ENCODE measurements at regions of chr2 and their contacts with region 1.

Region 1: GRCh38 chr2:25851740-25852503 is 26.4 kb downstream of the ASXL2 start:
- DNase-seq: peak; percentile 51 to 83 (median 62)
- ATAC-seq: peak; percentile 92
- H3K4me3 ChIP-seq: peak overlapping the region; percentile 21; the same call in 1 of the 2 replicates
- H3K27ac ChIP-seq: peak overlapping the region; percentile 98
- H3K4me1 ChIP-seq: peaks cover 17 to 22% of the 10 kb centered on the region in 2 experiments
- H3K27me3 ChIP-seq: no peaks in the 10 kb centered on the region
- CTCF ChIP-seq: peak; percentile 53 to 81 (median 65); a peak in 5 of 6 replicates
- EP300 ChIP-seq: peak; percentile 67; the same call in 1 of the 2 replicates
- POLR2A ChIP-seq: peak; percentile 71
- RAD21 ChIP-seq: peak; percentile 85 to 89

Region 2: DNA sequence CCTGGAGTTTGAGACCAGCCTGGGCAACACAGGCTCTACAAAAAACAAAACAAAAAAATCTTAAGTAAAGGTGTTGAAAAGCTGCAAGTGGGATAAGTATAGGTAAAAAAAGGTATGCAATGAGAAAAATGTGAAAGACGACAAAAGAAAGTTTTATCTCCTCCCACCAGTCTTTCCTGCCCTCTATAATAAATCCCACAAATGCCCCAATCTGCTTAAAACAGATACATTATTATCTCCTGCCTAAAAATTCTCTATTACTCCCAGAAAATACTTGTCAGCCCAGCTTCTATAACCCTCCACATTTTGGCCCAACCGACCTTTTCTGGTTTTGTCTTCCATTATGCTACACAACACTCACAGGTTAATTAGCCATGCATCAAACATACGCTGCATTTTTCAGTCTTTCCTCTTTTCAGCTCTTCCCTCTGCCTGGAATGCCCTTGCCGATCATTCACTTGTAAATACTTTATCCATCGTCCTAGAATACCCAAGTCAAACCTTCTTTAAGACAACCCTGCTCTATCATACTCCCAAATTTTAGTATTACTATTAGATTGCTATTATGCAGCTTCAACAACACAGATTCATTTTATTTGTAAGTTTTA is 15.6 kb after region 1 on chr2:
- CTCF ChIA-PET with region 1: no interaction called
- POLR2A ChIA-PET with region 1: interaction called, 10 read pairs
- in situ Hi-C with region 1: no loop called
- intact Hi-C with region 1: no loop called
- DNase-seq: no peak
- ATAC-seq: no peak; the same call in 2 of the 3 replicates
- H3K4me3 ChIP-seq: no peak overlapping the region
- H3K27ac ChIP-seq: no peak overlapping the region
- H3K4me1 ChIP-seq: peaks cover 0 to 3% of the 10 kb centered on the region in 2 experiments; a peak in 1 of 5 replicates
- H3K27me3 ChIP-seq: no peaks in the 10 kb centered on the region
- CTCF ChIP-seq: no peak
- EP300 ChIP-seq: no peak
- POLR2A ChIP-seq: no peak
- RAD21 ChIP-seq: no peak

Region 3: DNA sequence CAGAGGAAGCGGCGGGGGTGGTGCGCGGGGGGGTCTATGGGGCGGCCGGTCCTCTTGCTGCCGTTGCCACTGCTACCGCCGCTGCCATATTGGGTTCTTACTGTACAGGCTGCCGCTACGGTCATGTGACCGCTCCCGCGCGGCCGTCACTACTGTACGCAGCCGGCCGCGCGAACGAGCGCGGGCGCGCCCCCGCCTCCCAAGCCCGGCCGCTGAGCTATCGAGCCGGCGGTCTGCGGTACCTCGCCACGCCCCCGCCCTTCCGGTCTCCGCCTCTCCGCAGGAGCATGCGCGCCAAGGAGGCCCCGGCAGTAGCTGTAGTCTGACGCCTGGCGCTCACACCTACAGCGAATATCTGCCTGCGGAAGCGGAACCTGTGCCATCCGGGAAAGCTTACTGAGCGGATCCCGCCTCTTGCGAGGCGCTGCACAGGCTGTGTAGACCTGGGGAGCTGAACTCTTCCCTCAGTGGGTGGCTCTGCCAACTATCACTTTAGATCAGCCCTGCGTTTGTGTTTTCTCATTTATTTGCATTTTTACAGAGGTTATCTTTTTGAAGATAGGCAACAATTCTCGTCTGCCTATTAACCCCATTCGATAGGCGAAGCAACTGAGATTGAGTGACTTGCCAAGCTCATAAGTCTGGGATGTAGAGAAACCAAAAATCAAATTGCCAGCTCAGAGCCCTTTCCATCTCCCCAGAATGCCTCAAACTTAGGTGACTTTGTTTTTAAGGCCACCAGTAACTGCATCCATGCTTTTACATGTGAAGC is 26.6 kb after region 1 on chr2 and contains the start of gene ASXL2:
- CTCF ChIA-PET with region 1: no interaction called
- POLR2A ChIA-PET with region 1: interaction called, 11 read pairs
- in situ Hi-C with region 1: no loop called
- intact Hi-C with region 1: no loop called
- DNase-seq: peak; percentile 93 to 98 (median 95)
- ATAC-seq: peak; percentile 91
- H3K4me3 ChIP-seq: peak within 1 kb of the TSS; percentile 92
- H3K27ac ChIP-seq: peak within 1 kb of the TSS; percentile 91
- H3K4me1 ChIP-seq: peaks cover 5 to 9% of the 10 kb centered on the region in 2 experiments
- H3K27me3 ChIP-seq: no peaks in the 10 kb centered on the region
- CTCF ChIP-seq: peak in 1 of 3 experiments; percentile 20; a peak in 1 of 6 replicates
- EP300 ChIP-seq: peak; percentile 18; the same call in 1 of the 2 replicates
- POLR2A ChIP-seq: peak; percentile 79
- RAD21 ChIP-seq: no peak
- polyA plus RNA-seq, gene ASXL2: 2.2 to 2.5 TPM

Region 4: DNA sequence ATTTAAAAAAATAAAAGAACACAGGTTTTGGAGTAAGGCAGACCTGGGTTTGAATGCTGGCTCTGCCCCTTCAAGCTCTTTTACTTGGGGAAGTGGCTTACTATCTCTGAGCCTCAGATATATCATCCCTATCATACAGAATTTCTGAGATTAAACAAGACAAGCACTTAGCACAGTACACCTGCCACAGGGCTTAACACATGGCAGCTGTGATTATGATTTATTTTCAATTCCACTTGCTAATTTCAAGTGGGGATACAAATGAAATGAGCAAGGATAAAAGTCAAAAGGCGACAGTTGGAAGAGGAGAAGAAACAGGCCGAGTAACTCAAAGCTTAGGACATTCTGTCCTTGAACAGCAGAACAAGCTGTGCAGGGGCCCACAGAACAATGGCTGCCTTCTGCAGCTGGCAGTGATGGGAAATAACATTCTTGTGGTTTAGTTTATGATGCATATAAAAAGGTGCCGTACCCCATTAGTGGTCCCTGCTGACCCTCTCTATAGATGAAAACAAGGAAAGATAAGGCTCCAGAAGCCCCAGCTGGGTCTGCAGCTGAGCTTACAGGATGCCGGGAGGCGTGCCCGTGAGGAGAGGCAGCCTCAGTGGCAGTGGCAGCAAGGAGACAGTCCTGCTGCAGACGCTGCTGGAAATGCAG is 85.1 kb after region 1 on chr2:
- CTCF ChIA-PET with region 1: no interaction called
- POLR2A ChIA-PET with region 1: no interaction called
- in situ Hi-C with region 1: no loop called
- intact Hi-C with region 1: no loop called
- DNase-seq: no peak
- ATAC-seq: no peak
- H3K4me3 ChIP-seq: no peak overlapping the region
- H3K27ac ChIP-seq: no peak overlapping the region
- H3K4me1 ChIP-seq: no peaks in the 10 kb centered on the region
- H3K27me3 ChIP-seq: no peaks in the 10 kb centered on the region
- CTCF ChIP-seq: no peak
- EP300 ChIP-seq: no peak
- POLR2A ChIP-seq: no peak
- RAD21 ChIP-seq: no peak

Region 5: DNA sequence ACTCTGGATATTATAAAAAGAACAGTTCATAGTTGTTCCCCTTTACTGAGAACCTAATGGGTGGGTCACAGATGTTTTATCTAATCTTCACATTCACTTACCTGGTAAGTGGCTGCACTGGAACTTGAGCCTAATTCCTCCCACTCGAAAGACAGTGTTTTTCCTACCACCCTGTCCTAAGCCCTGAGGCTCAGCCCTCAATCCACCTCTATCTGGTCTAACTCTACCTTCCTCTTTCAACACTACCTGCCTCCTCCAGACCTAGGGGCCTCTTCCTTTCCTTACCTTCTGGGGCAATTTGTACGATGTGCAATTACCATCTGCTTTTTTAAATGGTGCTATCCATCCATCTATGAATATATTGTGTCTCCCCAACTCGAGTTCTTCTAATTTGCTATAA is 140.0 kb after region 1 on chr2:
- CTCF ChIA-PET with region 1: no interaction called
- POLR2A ChIA-PET with region 1: no interaction called
- in situ Hi-C with region 1: no loop called
- intact Hi-C with region 1: loop called (anchors 2 kb)
- DNase-seq: peak in 1 of 4 experiments; percentile 21
- ATAC-seq: peak; percentile 72
- H3K4me3 ChIP-seq: no peak overlapping the region
- H3K27ac ChIP-seq: no peak overlapping the region
- H3K4me1 ChIP-seq: peaks cover 0 to 8% of the 10 kb centered on the region in 2 experiments; a peak in 3 of 5 replicates
- H3K27me3 ChIP-seq: no peaks in the 10 kb centered on the region
- CTCF ChIP-seq: no peak
- EP300 ChIP-seq: no peak
- POLR2A ChIP-seq: no peak
- RAD21 ChIP-seq: no peak

Region 6: GRCh38 chr2:26300234-26300925 is 448.5 kb after region 1 on chr2:
- CTCF ChIA-PET with region 1: no interaction called
- POLR2A ChIA-PET with region 1: no interaction called
- in situ Hi-C with region 1: no loop called
- intact Hi-C with region 1: no loop called
- DNase-seq: no peak
- ATAC-seq: no peak
- H3K4me3 ChIP-seq: no peak overlapping the region
- H3K27ac ChIP-seq: no peak overlapping the region
- H3K4me1 ChIP-seq: peaks cover 0 to 2% of the 10 kb centered on the region in 2 experiments; a peak in 1 of 5 replicates
- H3K27me3 ChIP-seq: peaks cover 13 to 22% of the 10 kb centered on the region in 2 experiments; a peak in 4 of 5 replicates
- CTCF ChIP-seq: no peak
- EP300 ChIP-seq: no peak
- POLR2A ChIP-seq: no peak
- RAD21 ChIP-seq: no peak